Heart right ventricle (tissue), 16 donors: ENCODE measurements at regions of chr6 and their contacts with region 1.

Region 1: DNA sequence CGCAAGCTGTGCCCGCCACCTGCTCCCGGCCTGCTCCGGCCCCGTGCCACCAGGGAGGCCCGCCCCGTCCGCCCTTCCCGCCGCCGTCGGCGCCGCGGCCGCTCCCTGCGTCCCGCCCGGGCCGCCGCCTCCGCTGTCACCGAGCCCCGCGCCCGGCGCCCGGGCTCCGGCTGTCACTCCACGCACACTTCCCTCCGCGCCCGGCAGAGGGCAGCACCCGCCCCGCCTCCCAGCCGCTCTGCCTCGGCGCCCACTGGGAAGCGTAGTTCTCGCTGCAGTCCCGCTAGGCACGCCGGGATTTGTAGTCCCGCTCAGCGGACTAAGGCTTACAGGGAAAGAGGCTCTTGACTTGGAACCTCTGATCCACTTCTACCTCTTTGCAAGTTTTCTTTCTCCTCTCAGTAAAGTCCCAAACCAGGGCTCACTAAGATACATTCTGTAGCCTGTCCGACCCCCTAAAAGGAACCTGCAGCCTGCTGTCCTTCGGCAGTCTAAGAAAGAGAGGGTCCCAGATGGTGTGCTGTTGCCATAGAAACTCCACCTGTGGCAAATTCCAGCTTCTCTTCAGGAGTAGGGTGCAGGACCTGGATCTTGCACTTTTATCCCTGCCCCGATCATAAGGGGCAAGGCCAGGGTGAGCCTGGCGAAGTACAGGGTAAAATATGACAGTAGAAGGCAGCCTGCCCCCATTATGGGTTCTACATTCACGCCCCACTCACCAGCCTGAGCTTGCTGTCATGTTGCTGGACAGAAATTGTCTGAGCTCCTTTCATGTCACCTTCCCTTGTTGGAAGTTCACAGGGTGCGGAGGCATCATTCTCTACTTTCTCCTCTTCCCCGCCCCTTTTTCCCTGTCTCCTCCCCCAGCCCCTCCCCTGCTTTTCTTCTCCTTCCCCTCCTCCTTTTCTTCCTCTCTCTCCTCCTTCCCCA is at the start of gene TFEB:
- DNase-seq: peak; percentile 95
- ATAC-seq: peak; percentile 54 to 81 (median 72)
- H3K4me3 ChIP-seq: peak within 1 kb of the TSS; percentile 75 to 99 (median 92)
- H3K27ac ChIP-seq: peak within 1 kb of the TSS; percentile 97 to 100 (median 100)
- H3K4me1 ChIP-seq: peaks cover 11 to 41% (median 36%) of the 10 kb centered on the region in 9 donors
- H3K27me3 ChIP-seq: no peaks in the 10 kb centered on the region
- CTCF ChIP-seq: peak; percentile 85 to 100 (median 88)
- total RNA-seq, gene TFEB: 29.2 to 47.0 (median 39.6) TPM

Region 2: DNA sequence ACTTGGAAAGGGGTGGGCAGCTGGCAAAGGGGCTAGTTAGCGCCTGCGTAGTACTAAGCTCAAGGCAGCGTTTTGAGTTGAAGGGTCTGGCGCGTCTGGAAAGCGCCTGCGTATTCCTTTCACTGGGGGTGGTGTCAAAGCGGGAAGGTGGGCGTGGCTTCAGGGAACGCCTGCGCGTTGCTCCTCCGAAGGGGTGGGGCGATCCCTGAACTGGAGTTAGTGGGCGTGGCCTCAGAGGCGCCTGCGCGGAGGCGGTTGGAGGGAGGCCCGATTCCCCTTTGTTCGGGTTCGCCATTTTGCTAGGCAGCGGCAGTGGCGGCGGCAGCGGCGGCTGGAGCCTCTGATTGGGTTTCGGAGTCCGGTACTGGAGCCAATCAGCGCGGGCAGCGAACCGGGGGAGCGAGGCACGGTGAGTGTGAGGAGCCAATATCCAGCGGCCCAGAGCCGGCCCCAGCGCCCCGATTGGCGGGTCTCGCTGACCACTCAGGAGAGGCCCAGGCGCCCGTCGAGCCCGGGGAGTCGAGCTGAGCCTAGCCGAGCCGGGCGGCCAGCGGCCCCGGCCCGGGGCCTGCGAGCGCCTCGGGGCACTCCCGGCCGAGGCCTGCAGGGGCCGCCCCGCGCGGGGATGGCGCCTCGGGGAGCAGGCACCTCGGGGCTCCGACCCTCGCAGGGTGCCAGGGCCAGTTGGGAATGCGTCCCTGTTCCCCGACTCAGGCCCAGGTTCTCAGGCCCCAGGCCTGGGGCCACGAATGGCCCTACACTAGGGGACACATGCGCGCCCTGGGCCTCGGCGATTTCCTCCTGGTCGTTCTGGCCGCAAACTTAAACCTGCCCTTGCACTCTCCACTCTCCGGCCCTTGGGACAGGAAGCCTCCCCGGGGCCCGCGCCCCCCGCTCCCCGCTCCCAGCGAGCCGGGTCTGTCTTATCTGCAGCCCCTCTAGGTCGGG is 662.7 kb before region 1 on chr6 and contains the start of gene NFYA:
- intact Hi-C with region 1: loop called in 1 of 10 experiments (anchors 5 kb)
- DNase-seq: peak; percentile 100
- ATAC-seq: peak; percentile 80 to 91 (median 83)
- H3K4me3 ChIP-seq: peak within 1 kb of the TSS; percentile 84 to 98 (median 92)
- H3K27ac ChIP-seq: peak within 1 kb of the TSS; percentile 98 to 100 (median 100)
- H3K4me1 ChIP-seq: peaks cover 6 to 43% (median 38%) of the 10 kb centered on the region in 9 donors
- H3K27me3 ChIP-seq: no peaks in the 10 kb centered on the region
- CTCF ChIP-seq: peak in 7 of 9 donors; percentile 19 to 53 (median 36)
- total RNA-seq, gene NFYA: 8.9 to 12.0 (median 10.5) TPM

Region 3: GRCh38 chr6:41591859-41592502 is 143.7 kb before region 1 on chr6:
- intact Hi-C with region 1: no loop called
- DNase-seq: peak; percentile 72 to 73
- ATAC-seq: peak; percentile 37 to 81 (median 60)
- H3K4me3 ChIP-seq: no peak overlapping the region
- H3K27ac ChIP-seq: no peak overlapping the region
- H3K4me1 ChIP-seq: peaks cover 0 to 8% (median 0%) of the 10 kb centered on the region in 9 donors
- H3K27me3 ChIP-seq: no peaks in the 10 kb centered on the region
- CTCF ChIP-seq: peak; percentile 90 to 97 (median 92)

Region 4: DNA sequence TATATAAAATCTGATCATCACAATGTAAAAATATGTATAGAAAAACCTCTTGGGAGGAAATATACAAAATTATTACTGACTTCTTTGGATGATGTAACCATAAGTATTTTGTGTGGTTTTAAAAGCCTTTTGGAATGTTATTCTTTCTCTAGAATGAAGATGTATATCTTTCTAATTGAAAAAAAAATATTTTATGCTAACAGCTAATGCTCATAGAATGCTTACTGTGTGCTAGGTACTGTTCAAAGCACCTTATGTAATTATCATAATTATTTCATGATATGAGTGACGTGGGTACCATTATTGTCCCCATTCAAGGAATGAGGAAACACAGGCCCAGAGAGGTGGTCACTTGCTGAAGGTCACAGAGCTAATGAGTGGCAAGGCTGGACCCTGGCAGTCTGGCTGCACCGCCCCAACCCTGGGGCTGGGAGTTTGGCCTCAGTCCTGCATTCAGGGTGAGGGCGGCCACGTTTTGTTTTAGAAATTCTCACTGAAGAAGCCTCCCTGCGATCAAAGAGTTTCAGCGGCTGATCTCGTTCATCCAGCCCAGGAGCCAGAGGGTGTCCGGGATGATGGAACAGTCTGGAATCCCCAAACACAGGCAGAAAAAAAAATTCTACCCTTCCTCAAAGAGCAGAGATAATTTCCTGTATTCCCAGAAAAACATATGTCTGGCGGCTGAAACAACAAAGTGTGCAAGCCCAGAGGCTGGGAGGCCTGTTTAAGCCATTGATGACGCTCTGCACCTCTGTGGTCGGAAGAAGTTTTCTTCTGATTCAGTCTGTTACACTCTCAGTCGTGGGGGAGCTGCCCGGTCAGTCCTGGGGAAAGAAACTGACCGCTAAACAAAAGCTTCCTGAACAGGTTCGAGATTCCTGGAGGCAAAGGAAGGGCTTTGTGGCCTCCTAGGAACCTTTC is 37.6 kb before region 1 on chr6:
- intact Hi-C with region 1: loop called in 1 of 10 experiments (anchors 5 kb)
- DNase-seq: peak in 1 of 2 donors; percentile 51
- ATAC-seq: peak in 6 of 8 donors; percentile 30 to 76 (median 56)
- H3K4me3 ChIP-seq: no peak overlapping the region
- H3K27ac ChIP-seq: peak overlapping the region in 9 of 10 donors; percentile 65 to 93 (median 79)
- H3K4me1 ChIP-seq: peaks cover 6 to 94% (median 46%) of the 10 kb centered on the region in 9 donors
- H3K27me3 ChIP-seq: no peaks in the 10 kb centered on the region
- CTCF ChIP-seq: no peak

Region 5: GRCh38 chr6:41705996-41706835 is 29.5 kb before region 1 on chr6:
- intact Hi-C with region 1: loop called in 4 of 10 experiments (anchors 1 to 2 kb)
- DNase-seq: peak; percentile 83 to 87
- ATAC-seq: peak; percentile 85 to 93 (median 90)
- H3K4me3 ChIP-seq: peak overlapping the region in 1 of 10 donors; percentile 33
- H3K27ac ChIP-seq: peak overlapping the region; percentile 62 to 92 (median 81)
- H3K4me1 ChIP-seq: peaks cover 31 to 96% (median 66%) of the 10 kb centered on the region in 9 donors
- H3K27me3 ChIP-seq: no peaks in the 10 kb centered on the region
- CTCF ChIP-seq: peak; percentile 53 to 82 (median 76)

Region 6: DNA sequence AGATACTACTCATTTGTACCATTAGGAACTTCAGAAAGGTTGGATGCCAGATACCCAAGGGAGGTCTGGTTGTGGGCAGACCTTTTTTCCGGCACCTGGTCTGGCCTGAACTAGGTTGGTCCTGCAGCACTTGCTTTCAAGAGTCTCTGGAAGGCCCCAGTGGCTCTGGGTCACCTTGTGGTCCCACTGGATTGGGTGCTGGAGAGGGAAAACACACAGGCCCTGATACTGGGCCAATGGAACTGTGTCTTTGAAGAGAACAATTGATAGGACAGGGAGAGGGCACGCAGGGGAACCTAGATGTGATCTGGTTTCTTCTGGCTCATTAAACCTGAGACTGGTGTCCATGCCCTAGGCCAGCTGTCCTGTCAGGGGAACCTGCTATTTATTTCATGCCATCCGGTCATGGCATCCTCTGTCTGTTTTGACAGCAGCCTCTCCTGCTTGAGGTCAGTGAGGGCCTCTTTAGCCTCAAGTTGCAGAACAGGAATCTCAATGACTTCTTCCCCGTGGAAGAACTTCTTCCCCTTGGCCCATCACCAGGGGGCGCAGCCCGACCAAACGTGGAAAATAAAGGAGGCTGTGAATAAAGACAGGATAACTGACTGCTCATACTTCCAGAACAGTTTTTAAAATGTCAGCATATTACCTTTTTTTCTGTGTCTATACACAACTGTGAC is 339.6 kb after region 1 on chr6:
- intact Hi-C with region 1: no loop called
- DNase-seq: peak; percentile 76 to 80
- ATAC-seq: peak; percentile 25 to 80 (median 70)
- H3K4me3 ChIP-seq: no peak overlapping the region
- H3K27ac ChIP-seq: peak overlapping the region in 8 of 10 donors; percentile 20 to 56 (median 36)
- H3K4me1 ChIP-seq: peaks cover 0 to 29% (median 14%) of the 10 kb centered on the region in 9 donors
- H3K27me3 ChIP-seq: no peaks in the 10 kb centered on the region
- CTCF ChIP-seq: peak; percentile 62 to 90 (median 85)

Region 7: GRCh38 chr6:42417641-42418112 is 682.0 kb after region 1 on chr6:
- intact Hi-C with region 1: no loop called
- DNase-seq: no peak
- ATAC-seq: peak in 1 of 8 donors; percentile 33
- H3K4me3 ChIP-seq: no peak overlapping the region
- H3K27ac ChIP-seq: peak overlapping the region in 1 of 10 donors; percentile 21
- H3K4me1 ChIP-seq: peaks cover 0 to 11% (median 0%) of the 10 kb centered on the region in 9 donors
- H3K27me3 ChIP-seq: no peaks in the 10 kb centered on the region
- CTCF ChIP-seq: no peak